ENCODE measurements at regions of chr11 and their contacts with region 1.

Region 1: DNA sequence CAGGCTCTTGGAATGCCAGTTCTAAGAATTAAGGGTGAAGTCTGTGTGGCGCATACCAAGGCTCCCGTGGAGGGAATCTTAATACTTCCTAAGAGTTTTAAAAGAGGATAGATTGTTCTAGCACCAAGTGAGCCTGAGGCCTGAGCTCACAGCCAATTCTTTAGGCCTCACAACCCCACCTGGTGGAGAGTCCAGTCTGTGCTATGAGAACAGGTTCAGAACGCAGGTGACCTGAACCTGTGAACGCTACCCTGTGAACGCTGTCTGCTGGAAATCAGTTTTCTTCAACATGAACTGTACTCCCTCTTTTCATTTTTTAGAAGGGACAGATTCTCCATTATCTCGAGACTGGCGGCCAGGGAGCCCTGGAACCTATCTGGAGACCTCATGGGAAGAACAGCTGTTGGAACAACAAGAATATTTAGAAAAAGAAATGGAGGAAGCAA is 43.2 kb upstream of the DLAT start:
- DNase-seq: peak; percentile 76
- H3K4me3 Mint-ChIP-seq: no peak overlapping the region
- H3K27ac Mint-ChIP-seq: no peak overlapping the region
- H3K4me1 Mint-ChIP-seq: peaks cover 6% of the 10 kb centered on the region
- H3K27me3 Mint-ChIP-seq: peaks cover 24% of the 10 kb centered on the region

Region 2: GRCh38 chr11:111926505-111927391 is 55.3 kb before region 1 on chr11:
- CTCF ChIA-PET with region 1: interaction called, 217 read pairs
- DNase-seq: peak; percentile 96
- H3K4me3 Mint-ChIP-seq: peak overlapping the region; percentile 68
- H3K27ac Mint-ChIP-seq: peak overlapping the region; percentile 91
- H3K4me1 Mint-ChIP-seq: peaks cover 18% of the 10 kb centered on the region
- H3K27me3 Mint-ChIP-seq: peaks cover 23% of the 10 kb centered on the region

Region 3: GRCh38 chr11:111944651-111945051 is 37.4 kb before region 1 on chr11:
- CTCF ChIA-PET with region 1: interaction called, 217 read pairs
- DNase-seq: no peak
- H3K4me3 Mint-ChIP-seq: no peak overlapping the region
- H3K27ac Mint-ChIP-seq: peak overlapping the region; percentile 77
- H3K4me1 Mint-ChIP-seq: peaks cover 21% of the 10 kb centered on the region
- H3K27me3 Mint-ChIP-seq: no peaks in the 10 kb centered on the region

Region 4: GRCh38 chr11:111992206-111992855 is 10.3 kb after region 1 on chr11:
- CTCF ChIA-PET with region 1: interaction called, 14 read pairs
- DNase-seq: no peak
- H3K4me3 Mint-ChIP-seq: no peak overlapping the region
- H3K27ac Mint-ChIP-seq: no peak overlapping the region
- H3K4me1 Mint-ChIP-seq: no peaks in the 10 kb centered on the region
- H3K27me3 Mint-ChIP-seq: no peaks in the 10 kb centered on the region

Region 5: GRCh38 chr11:112074026-112074811 is 92.2 kb after region 1 on chr11 and contains the start of gene NKAPD1:
- CTCF ChIA-PET with region 1: no interaction called
- DNase-seq: peak; percentile 86
- H3K4me3 Mint-ChIP-seq: peak within 1 kb of the TSS; percentile 97
- H3K27ac Mint-ChIP-seq: peak within 1 kb of the TSS; percentile 87
- H3K4me1 Mint-ChIP-seq: peaks cover 35% of the 10 kb centered on the region
- H3K27me3 Mint-ChIP-seq: peaks cover 16% of the 10 kb centered on the region

Measured in activated naive CD4-positive, alpha-beta T cell treated with anti-CD3 and anti-CD28 coated beads, Interleukin-2, amount 10 ng/mL, durations not matched to agents 7 days and 5 days (primary cell).